ENCODE measurements at regions of chr11 and their contacts with region 1.

Region 1: DNA sequence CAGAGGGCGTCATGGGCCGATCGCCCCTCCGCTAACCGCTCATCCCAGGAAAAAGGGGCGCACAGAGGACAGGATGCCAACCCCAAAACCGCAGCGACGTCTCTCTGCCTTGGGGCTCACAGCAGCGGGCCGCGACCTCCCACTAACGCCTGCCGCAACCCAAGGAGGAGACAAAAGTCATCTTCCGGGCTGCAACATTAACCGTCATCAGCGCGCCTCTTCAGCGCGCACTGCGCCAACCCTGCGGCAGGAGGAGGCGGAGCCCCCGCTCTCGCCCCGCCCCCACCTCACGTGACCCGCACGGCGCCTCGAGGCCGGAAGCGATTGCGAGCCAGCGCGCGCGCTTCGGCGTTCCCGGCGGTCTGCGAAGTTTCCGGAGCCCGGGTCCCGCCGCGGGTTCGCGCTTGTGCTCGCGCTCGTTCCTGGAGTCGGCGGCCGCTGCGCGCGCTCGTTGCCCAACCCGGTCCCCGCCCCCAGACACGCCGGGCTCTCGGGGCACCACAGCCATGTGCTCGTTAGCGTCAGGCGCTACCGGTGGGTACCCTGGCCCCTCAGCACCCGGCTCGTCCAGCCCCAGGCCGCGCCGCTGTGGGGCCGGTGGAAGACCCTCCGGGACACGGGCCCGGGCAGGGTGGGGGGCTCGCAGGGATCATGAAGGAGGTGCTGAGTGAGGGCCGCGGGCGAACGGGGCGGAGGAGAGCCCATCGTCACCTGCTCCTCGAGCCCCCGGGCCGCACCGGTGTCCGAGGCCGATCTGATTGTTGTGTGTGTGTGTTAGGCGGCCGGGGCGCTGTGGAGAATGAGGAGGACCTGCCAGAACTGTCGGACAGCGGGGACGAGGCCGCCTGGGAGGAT is at the start of gene PRMT3:
- DNase-seq: peak; percentile 83 to 95 (median 92)
- H3K4me3 ChIP-seq: peak within 1 kb of the TSS; percentile 60 to 99 (median 93)
- H3K27ac ChIP-seq: peak within 1 kb of the TSS; percentile 78 to 99 (median 96)
- H3K27me3 ChIP-seq: no peaks in the 10 kb centered on the region
- CTCF ChIP-seq: peak; percentile 52 to 99 (median 95)
- total RNA-seq, gene PRMT3: 12.6 to 34.9 (median 19.9) TPM

Region 2: GRCh38 chr11:20303343-20303965 is 84.0 kb before region 1 on chr11:
- intact Hi-C with region 1: no loop called
- DNase-seq: no peak
- H3K4me3 ChIP-seq: no peak overlapping the region
- H3K27ac ChIP-seq: no peak overlapping the region
- H3K27me3 ChIP-seq: peaks cover 0 to 44% (median 0%) of the 10 kb centered on the region in 45 donors
- CTCF ChIP-seq: no peak

Region 3: DNA sequence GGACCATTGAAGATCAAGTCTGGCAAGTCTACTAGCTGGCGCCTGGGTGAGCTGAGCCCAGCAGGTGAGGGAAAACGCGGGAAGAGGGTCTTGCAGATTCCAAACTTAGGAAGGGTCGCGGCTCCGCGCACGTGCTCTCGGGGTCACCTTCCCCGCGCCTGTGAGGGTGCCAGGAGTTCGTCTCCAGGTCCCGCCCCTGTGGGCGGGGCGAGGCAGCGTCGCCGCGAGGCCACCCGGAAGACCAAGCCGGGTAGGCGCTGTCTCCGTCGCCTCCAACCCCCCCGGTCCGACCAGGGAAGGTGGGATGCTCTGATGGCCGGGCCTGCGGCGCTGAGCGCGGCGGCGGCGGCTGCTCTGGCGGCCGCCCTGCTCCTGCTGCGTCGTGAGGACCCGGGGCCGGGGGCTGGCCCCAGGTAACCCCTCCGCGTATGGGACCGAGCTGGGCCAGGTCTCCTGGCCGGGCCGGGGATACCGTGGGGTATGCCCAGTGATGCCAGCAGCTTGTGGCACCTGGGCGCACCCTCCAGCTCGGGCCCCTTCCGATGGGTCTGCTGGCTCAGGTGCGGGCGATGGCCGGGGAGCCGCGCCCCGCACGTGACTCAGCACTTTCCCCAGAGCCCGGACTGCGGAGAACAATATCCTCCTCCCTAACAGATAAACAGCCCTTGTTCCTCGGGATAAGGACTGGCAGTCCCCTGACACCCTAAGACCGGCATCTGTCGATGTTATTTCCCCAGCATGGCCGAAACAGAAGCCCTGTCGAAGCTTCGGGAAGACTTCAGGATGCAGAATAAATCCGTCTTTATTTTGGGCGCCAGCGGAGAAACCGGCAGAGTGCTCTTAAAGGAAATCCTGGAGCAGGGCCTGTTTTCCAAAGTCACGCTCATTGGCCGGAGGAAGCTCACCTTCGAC is 23.7 kb before region 1 on chr11 and contains the start of gene HTATIP2:
- intact Hi-C with region 1: loop called in 1 of 2 experiments (anchors 1 kb)
- DNase-seq: peak; percentile 50 to 84 (median 72)
- H3K4me3 ChIP-seq: peak within 1 kb of the TSS; percentile 56 to 95 (median 85)
- H3K27ac ChIP-seq: peak within 1 kb of the TSS; percentile 73 to 99 (median 97)
- H3K27me3 ChIP-seq: no peaks in the 10 kb centered on the region
- CTCF ChIP-seq: peak in 20 of 56 donors; percentile 6 to 43 (median 15)
- total RNA-seq, gene HTATIP2: 12.7 to 59.9 (median 25.5) TPM

Region 4: DNA sequence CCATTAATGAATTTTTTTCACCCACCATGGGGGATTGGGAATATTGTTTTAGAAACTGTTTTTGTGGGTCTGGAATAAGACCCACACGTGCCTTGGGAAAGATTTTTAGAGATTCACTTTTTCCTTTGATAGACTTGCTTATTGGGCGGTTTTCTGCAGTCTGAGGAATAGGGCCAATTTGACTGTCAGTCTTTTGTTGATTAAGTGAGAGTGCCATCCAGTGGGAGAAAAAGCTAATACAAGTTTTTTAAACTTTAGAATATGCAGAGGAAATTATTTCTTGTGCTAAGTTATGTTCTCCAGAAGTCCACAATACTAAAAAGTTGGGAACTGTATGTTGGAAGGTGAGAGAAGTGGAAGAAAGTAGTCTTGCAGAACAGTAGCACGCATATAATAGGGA is 56.1 kb after region 1 on chr11:
- intact Hi-C with region 1: loop called (anchors 10 kb)
- DNase-seq: no peak
- H3K4me3 ChIP-seq: no peak overlapping the region
- H3K27ac ChIP-seq: no peak overlapping the region
- H3K27me3 ChIP-seq: no peaks in the 10 kb centered on the region
- CTCF ChIP-seq: peak in 49 of 56 donors; percentile 12 to 73 (median 41)

Region 5: GRCh38 chr11:20609727-20610707 is 222.5 kb after region 1 on chr11:
- intact Hi-C with region 1: loop called (anchors 5 kb)
- DNase-seq: peak; percentile 63 to 88 (median 76)
- H3K4me3 ChIP-seq: peak overlapping the region in 44 of 59 donors; percentile 2 to 60 (median 31)
- H3K27ac ChIP-seq: no peak overlapping the region
- H3K27me3 ChIP-seq: peaks cover 6 to 71% (median 27%) of the 10 kb centered on the region in 45 donors
- CTCF ChIP-seq: peak; percentile 67 to 98 (median 92)